Activated CD4-positive, alpha-beta T cell treated with anti-CD3 and anti-CD28 coated beads, Interleukin-2, amount 10 ng/mL, durations not matched to agents 24 days and 14 days (primary cell): ENCODE measurements at regions of chr14 and their contacts with region 1.

Region 1: GRCh38 chr14:72451054-72451972 is 442.6 kb downstream of the DPF3 start:
- DNase-seq: peak; percentile 84
- H3K4me3 Mint-ChIP-seq: peak overlapping the region; percentile 73
- H3K27ac Mint-ChIP-seq: peak overlapping the region; percentile 76
- H3K4me1 Mint-ChIP-seq: peaks cover 61% of the 10 kb centered on the region
- H3K27me3 Mint-ChIP-seq: peaks cover 2% of the 10 kb centered on the region

Region 2: DNA sequence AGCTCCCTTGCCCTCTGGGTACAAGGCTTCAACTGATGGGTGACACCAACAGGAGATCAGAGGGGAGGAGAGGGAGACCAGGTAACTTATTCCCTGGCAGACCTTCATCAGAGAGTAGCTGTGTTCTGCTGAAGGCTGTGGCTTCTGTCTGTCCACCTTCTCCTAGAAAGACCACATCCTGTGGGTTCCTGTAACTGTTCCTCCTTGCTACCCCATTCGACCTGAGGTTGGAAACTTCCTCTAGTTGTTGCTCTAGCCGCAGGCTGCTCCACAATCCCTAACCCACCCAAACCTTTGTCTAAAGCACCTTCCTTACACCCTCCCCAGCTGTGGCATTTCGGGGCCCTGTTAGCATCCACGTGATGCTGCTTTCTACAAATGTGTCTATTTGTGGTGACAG is 11.6 kb before region 1 on chr14:
- intact Hi-C with region 1: loop called (anchors 1 kb)
- DNase-seq: peak; percentile 88
- H3K4me3 Mint-ChIP-seq: peak overlapping the region; percentile 78
- H3K27ac Mint-ChIP-seq: peak overlapping the region; percentile 77
- H3K4me1 Mint-ChIP-seq: peaks cover 88% of the 10 kb centered on the region
- H3K27me3 Mint-ChIP-seq: peaks cover 1% of the 10 kb centered on the region